Activated B cell treated with CpG ODN at 0.5 μM for 24 hours (primary cell): ENCODE measurements at regions of chr10 and their contacts with region 1.

Region 1: GRCh38 chr10:61903221-61903927 is 1.9 kb downstream of the ARID5B start:
- DNase-seq: peak; percentile 76
- ATAC-seq: peak; percentile 46
- H3K4me3 Mint-ChIP-seq: peak overlapping the region; percentile 97
- H3K27ac Mint-ChIP-seq: peak overlapping the region; percentile 98
- H3K4me1 Mint-ChIP-seq: peaks cover 51% of the 10 kb centered on the region
- H3K27me3 Mint-ChIP-seq: no peaks in the 10 kb centered on the region
- CTCF ChIP-seq: no peak

Region 2: GRCh38 chr10:61135276-61135721 is 768.1 kb before region 1 on chr10:
- CTCF ChIA-PET with region 1: no interaction called
- POLR2A ChIA-PET with region 1: interaction called, 4 read pairs
- intact Hi-C with region 1: loop called (anchors 2 kb)
- DNase-seq: peak; percentile 19
- ATAC-seq: peak; percentile 94
- H3K4me3 Mint-ChIP-seq: peak overlapping the region; percentile 68
- H3K27ac Mint-ChIP-seq: peak overlapping the region; percentile 91
- H3K4me1 Mint-ChIP-seq: peaks cover 43% of the 10 kb centered on the region
- H3K27me3 Mint-ChIP-seq: no peaks in the 10 kb centered on the region
- CTCF ChIP-seq: no peak

Region 3: GRCh38 chr10:61774031-61774430 is 129.3 kb before region 1 on chr10:
- CTCF ChIA-PET with region 1: no interaction called
- POLR2A ChIA-PET with region 1: no interaction called
- intact Hi-C with region 1: no loop called
- DNase-seq: no peak
- ATAC-seq: no peak
- H3K4me3 Mint-ChIP-seq: no peak overlapping the region
- H3K27ac Mint-ChIP-seq: no peak overlapping the region
- H3K4me1 Mint-ChIP-seq: no peaks in the 10 kb centered on the region
- H3K27me3 Mint-ChIP-seq: peaks cover 2% of the 10 kb centered on the region
- CTCF ChIP-seq: no peak

Region 4: GRCh38 chr10:61937631-61938351 is 34.4 kb after region 1 on chr10:
- CTCF ChIA-PET with region 1: interaction called, 8 read pairs
- POLR2A ChIA-PET with region 1: interaction called, 256 read pairs
- intact Hi-C with region 1: no loop called
- DNase-seq: no peak
- ATAC-seq: no peak
- H3K4me3 Mint-ChIP-seq: no peak overlapping the region
- H3K27ac Mint-ChIP-seq: peak overlapping the region; percentile 84
- H3K4me1 Mint-ChIP-seq: peaks cover 87% of the 10 kb centered on the region
- H3K27me3 Mint-ChIP-seq: no peaks in the 10 kb centered on the region
- CTCF ChIP-seq: no peak

Region 5: GRCh38 chr10:61987951-61988379 is 84.6 kb after region 1 on chr10:
- CTCF ChIA-PET with region 1: interaction called, 18 read pairs
- POLR2A ChIA-PET with region 1: interaction called, 270 read pairs
- intact Hi-C with region 1: loop called (anchors 1 kb)
- DNase-seq: no peak
- ATAC-seq: peak; percentile 90
- H3K4me3 Mint-ChIP-seq: peak overlapping the region; percentile 79
- H3K27ac Mint-ChIP-seq: peak overlapping the region; percentile 97
- H3K4me1 Mint-ChIP-seq: peaks cover 92% of the 10 kb centered on the region
- H3K27me3 Mint-ChIP-seq: no peaks in the 10 kb centered on the region
- CTCF ChIP-seq: no peak

Region 6: DNA sequence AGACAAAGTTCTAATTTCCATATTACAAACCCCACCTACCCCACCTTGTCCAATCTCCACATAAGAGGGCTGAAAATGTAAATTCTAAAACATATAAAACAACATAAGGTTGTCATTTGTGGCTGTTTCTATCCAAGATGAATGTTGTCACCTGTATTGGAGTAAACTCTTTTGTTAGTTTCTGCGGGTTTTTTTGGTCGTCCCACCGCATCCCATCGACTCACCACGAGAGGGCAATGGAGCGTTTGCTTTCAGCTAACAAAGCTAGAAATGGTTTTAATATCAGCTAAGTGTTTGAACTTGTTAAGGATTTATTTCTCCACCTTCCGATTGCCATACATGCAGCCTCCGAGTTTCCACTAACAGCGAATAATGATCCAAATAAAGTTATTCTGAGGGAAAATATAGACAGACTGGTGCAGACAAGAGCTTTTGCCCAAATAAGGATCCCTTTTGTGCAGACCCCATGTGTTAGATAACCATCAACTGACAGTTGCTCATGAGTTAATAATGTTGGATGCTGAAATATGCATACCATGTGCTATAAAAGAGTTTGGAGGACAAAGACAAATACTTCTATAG is 135.3 kb after region 1 on chr10:
- CTCF ChIA-PET with region 1: interaction called, 101 read pairs
- POLR2A ChIA-PET with region 1: interaction called, 589 read pairs
- intact Hi-C with region 1: loop called (anchors 1 kb)
- DNase-seq: no peak
- ATAC-seq: peak; percentile 59
- H3K4me3 Mint-ChIP-seq: peak overlapping the region; percentile 69
- H3K27ac Mint-ChIP-seq: peak overlapping the region; percentile 93
- H3K4me1 Mint-ChIP-seq: peaks cover 90% of the 10 kb centered on the region
- H3K27me3 Mint-ChIP-seq: no peaks in the 10 kb centered on the region
- CTCF ChIP-seq: no peak

Region 7: DNA sequence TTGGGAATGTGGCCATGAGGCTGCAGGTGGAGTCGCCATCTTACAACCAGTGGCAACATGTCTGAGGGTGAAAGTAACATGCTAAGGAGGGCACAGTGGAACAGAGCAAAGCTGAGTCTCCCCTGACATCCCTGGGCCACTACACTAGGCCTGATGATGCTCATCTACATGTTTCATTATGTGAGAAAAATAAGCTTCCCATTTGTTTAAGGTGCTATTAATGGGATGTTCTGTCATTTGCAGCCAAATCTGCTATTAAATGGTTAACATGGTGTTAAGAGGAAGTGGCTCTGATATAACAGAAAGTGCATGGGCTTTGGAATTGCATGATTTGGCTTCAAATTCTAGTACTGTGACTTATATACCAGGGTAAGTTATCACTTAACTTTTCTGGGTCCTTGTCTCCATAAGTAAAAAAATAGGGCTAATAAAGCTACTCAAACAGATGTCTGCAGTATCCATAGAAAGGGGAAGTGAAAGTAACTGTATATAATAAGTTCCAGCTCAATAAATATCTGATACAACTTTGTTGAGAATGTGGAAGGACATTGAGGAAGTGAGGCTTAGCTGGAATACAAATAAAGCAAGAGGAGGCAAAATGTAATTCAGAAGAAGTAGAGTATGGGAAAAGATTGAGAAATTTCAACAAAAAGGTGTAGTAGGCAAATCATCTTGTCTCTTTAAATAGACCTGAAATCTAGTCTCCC is 206.4 kb after region 1 on chr10:
- CTCF ChIA-PET with region 1: interaction called, 3 read pairs
- POLR2A ChIA-PET with region 1: interaction called, 46 read pairs
- intact Hi-C with region 1: no loop called
- DNase-seq: no peak
- ATAC-seq: peak; percentile 72
- H3K4me3 Mint-ChIP-seq: peak overlapping the region; percentile 58
- H3K27ac Mint-ChIP-seq: peak overlapping the region; percentile 87
- H3K4me1 Mint-ChIP-seq: peaks cover 70% of the 10 kb centered on the region
- H3K27me3 Mint-ChIP-seq: no peaks in the 10 kb centered on the region
- CTCF ChIP-seq: no peak

Region 8: DNA sequence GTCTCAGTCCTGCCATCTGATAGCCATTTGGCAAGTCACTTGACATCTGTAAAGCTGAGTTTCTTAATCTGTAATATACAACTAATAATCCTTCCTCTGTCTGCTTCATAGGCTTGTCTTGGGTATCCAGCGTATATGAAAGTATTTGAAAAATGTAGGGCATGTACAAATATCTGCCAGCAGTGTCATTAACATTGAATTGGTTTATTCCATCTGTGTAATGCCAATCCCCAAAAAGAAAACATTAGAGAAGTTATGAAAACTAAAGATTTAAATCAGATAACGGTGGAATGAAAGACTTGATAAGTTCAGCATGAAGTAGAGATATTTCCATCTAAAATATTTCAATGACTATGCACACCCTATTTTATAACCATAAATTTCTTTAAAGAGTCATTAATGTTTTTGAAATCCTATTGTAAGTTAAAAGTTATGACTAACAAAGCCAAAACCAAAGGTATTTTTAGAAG is 375.1 kb after region 1 on chr10:
- CTCF ChIA-PET with region 1: no interaction called
- POLR2A ChIA-PET with region 1: no interaction called
- intact Hi-C with region 1: no loop called
- DNase-seq: no peak
- ATAC-seq: no peak
- H3K4me3 Mint-ChIP-seq: no peak overlapping the region
- H3K27ac Mint-ChIP-seq: no peak overlapping the region
- H3K4me1 Mint-ChIP-seq: no peaks in the 10 kb centered on the region
- H3K27me3 Mint-ChIP-seq: peaks cover 4% of the 10 kb centered on the region
- CTCF ChIP-seq: no peak

Region 9: GRCh38 chr10:63268798-63269503 is 1365.6 kb after region 1 on chr10:
- CTCF ChIA-PET with region 1: no interaction called
- POLR2A ChIA-PET with region 1: interaction called, 4 read pairs
- intact Hi-C with region 1: loop called (anchors 5 kb)
- DNase-seq: peak; percentile 52
- ATAC-seq: peak; percentile 89
- H3K4me3 Mint-ChIP-seq: peak overlapping the region; percentile 99
- H3K27ac Mint-ChIP-seq: peak overlapping the region; percentile 98
- H3K4me1 Mint-ChIP-seq: peaks cover 35% of the 10 kb centered on the region
- H3K27me3 Mint-ChIP-seq: no peaks in the 10 kb centered on the region
- CTCF ChIP-seq: no peak